CD8-positive, alpha-beta memory T cell (primary cell): ENCODE measurements at regions of chr7 and their contacts with region 1.

Region 1: DNA sequence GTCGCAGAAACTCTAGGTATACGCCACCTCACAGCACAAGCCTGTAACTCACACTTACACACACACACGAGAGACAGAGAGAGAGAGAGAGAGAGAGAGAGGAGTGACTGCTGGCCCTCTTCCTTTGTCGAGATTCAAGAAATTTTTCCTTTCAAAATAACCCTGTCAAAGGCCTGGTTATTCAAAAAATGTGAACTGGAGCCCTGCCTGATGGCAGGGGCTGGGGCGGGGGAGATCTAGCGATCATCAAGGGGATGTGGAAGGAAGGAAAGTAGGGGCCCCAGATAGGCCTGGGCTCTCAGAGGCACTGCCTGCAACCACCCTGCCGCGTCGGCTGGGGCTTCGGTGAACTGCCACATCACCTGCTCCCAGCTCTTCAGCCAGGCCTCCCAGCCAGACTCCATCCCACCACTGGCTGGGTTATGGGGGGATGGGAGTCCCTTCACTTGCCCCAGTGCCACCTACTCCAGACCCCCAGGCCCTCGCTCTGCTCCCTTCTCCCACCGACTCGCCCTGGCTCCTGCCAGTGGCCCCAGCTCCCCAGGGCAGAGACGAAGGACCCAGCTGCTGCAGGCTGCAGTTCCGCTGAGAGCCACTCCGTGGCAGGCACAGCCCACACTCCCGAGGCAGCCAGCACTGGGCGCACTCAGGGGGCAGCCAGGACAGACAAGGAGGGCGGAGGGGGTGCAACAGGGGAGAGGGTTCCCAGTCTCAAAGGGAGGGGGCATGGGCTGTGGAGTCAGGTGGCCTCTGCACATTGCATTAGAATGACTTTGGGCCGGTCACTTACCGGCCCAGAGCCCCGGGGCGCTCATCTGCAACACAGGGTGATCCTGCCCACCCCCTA is 15.3 kb downstream of the KCNH2 start:
- DNase-seq: peak; percentile 35 to 69 (median 50)
- H3K4me3 ChIP-seq: no peak overlapping the region
- H3K4me3 Mint-ChIP-seq: peak overlapping the region in 1 of 7 donors; percentile 79
- H3K27ac ChIP-seq: peak overlapping the region; percentile 76
- H3K27ac Mint-ChIP-seq: no peak overlapping the region
- H3K4me1 ChIP-seq: peaks cover 9% of the 10 kb centered on the region
- H3K4me1 Mint-ChIP-seq: peaks cover 2 to 10% (median 4%) of the 10 kb centered on the region in 3 donors
- H3K27me3 ChIP-seq: peaks cover 7% of the 10 kb centered on the region
- H3K27me3 Mint-ChIP-seq: peaks cover 19 to 28% of the 10 kb centered on the region in 2 donors

Region 2: GRCh38 chr7:150420987-150421674 is 541.6 kb before region 1 on chr7:
- CTCF ChIA-PET with region 1: no interaction called
- POLR2A ChIA-PET with region 1: no interaction called
- DNase-seq: peak; percentile 71 to 86 (median 79)
- H3K4me3 ChIP-seq: no peak overlapping the region
- H3K4me3 Mint-ChIP-seq: peak overlapping the region in 5 of 7 donors; percentile 1 to 67 (median 39)
- H3K27ac ChIP-seq: no peak overlapping the region
- H3K27ac Mint-ChIP-seq: peak overlapping the region in 3 of 8 donors; percentile 43 to 71 (median 71)
- H3K4me1 ChIP-seq: peaks cover 4% of the 10 kb centered on the region
- H3K4me1 Mint-ChIP-seq: peaks cover 5 to 7% (median 6%) of the 10 kb centered on the region in 3 donors
- H3K27me3 ChIP-seq: no peaks in the 10 kb centered on the region
- H3K27me3 Mint-ChIP-seq: peaks cover 0 to 4% of the 10 kb centered on the region in 2 donors

Region 3: GRCh38 chr7:150891740-150892139 is 71.0 kb before region 1 on chr7:
- CTCF ChIA-PET with region 1: no interaction called
- POLR2A ChIA-PET with region 1: no interaction called
- DNase-seq: no peak
- H3K4me3 ChIP-seq: no peak overlapping the region
- H3K4me3 Mint-ChIP-seq: no peak overlapping the region
- H3K27ac ChIP-seq: no peak overlapping the region
- H3K27ac Mint-ChIP-seq: no peak overlapping the region
- H3K4me1 ChIP-seq: no peaks in the 10 kb centered on the region
- H3K4me1 Mint-ChIP-seq: no peaks in the 10 kb centered on the region
- H3K27me3 ChIP-seq: peaks cover 2% of the 10 kb centered on the region
- H3K27me3 Mint-ChIP-seq: peaks cover 6 to 28% of the 10 kb centered on the region in 2 donors

Region 4: DNA sequence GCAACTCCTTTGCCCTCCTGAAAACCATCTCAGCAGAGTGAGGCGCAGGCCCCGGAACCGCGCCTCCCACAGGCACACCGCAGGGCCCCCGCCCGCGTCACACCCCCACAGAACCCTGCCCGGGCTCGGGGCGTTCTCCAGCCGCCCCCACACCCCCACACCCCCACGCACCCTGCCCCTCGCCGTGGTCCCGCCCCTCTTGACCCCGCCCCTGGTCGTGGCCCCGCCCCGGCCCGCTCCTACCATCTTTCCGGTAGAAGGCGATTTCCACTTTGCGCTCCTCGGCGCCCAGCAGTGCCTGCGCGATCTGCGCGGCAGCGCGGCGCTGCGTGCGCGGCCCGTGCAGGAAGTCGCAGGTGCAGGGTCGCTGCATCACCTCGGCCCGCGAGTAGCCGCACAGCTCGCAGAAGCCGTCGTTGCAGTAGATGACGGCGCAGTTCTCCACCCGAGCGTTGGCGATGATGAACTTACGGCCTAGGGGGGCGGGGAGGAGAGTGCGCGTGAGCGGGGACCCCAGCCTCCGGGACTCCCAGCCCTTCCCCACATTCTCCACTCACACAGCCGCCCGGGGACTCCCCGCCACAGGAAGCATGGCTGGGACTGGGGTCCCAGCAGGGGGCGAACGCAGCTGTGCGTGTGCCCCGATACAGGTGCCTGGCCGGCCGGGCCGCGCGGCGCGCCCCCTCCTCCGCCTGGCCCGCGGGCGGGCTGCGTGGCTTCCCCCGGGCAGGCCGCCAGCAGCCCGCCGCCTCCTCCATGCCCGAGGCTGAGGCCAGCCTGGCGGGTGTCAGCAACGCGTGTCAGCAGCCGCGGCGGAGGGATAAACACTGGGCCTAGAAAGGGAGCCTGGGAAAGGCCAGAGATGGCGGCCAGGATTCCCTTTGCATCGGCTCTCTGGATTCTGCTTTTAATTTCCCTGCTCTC is 12.0 kb after region 1 on chr7:
- CTCF ChIA-PET with region 1: interaction called, 18 read pairs
- POLR2A ChIA-PET with region 1: no interaction called
- DNase-seq: peak; percentile 69 to 86 (median 78)
- H3K4me3 ChIP-seq: peak overlapping the region; percentile 78
- H3K4me3 Mint-ChIP-seq: peak overlapping the region; percentile 86 to 90 (median 88)
- H3K27ac ChIP-seq: peak overlapping the region; percentile 64
- H3K27ac Mint-ChIP-seq: peak overlapping the region; percentile 58 to 96 (median 87)
- H3K4me1 ChIP-seq: peaks cover 45% of the 10 kb centered on the region
- H3K4me1 Mint-ChIP-seq: peaks cover 32 to 46% (median 35%) of the 10 kb centered on the region in 3 donors
- H3K27me3 ChIP-seq: peaks cover 21% of the 10 kb centered on the region
- H3K27me3 Mint-ChIP-seq: peaks cover 24 to 25% of the 10 kb centered on the region in 2 donors

Region 5: GRCh38 chr7:150988230-150989226 is 25.8 kb after region 1 on chr7:
- CTCF ChIA-PET with region 1: interaction called, 33 read pairs
- POLR2A ChIA-PET with region 1: no interaction called
- DNase-seq: peak; percentile 54 to 75 (median 62)
- H3K4me3 ChIP-seq: peak overlapping the region; percentile 38
- H3K4me3 Mint-ChIP-seq: peak overlapping the region in 5 of 7 donors; percentile 15 to 65 (median 54)
- H3K27ac ChIP-seq: no peak overlapping the region
- H3K27ac Mint-ChIP-seq: peak overlapping the region in 2 of 8 donors; percentile 29 to 64
- H3K4me1 ChIP-seq: peaks cover 17% of the 10 kb centered on the region
- H3K4me1 Mint-ChIP-seq: peaks cover 12 to 24% (median 15%) of the 10 kb centered on the region in 3 donors
- H3K27me3 ChIP-seq: no peaks in the 10 kb centered on the region
- H3K27me3 Mint-ChIP-seq: peaks cover 18 to 31% of the 10 kb centered on the region in 2 donors

Region 6: DNA sequence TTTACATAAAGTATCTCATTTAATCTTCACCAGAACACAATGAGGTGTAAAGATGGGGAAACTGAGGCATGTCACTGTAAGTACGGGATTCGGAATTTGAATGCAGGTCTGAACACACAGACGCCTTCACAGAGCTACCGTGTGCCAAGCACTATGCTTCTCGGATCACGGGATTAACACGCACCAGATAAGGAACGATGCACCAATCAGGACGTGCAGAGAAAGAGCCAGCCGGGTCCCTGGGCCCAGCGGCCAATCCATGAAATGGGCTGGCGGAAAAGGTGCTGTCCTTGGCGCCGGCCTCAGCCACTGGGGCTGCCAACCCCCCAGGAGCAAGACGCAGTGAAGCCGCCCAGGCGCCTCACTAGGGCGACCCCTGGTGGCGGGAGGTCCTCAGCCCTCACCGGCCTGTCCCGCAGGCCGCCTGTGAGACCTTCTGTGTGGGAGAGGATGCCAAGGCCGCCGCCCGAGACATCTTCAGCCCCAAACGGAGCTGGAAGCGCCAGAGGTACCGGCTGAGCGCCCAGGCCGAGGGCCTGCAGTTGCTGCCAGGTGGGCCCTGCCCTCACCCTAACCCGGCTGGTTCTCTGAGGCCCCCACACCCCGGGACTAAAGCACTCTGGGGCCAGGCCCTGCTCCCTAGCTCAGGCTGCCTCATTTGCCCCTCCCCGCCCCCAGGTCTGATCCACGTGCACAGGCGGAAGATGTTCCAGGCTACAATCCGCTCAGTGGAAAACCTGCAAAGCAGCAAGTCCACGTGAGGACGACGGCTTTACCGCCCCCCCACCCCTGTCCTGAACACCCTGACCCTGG is 45.9 kb after region 1 on chr7:
- CTCF ChIA-PET with region 1: interaction called, 11 read pairs
- POLR2A ChIA-PET with region 1: no interaction called
- DNase-seq: peak; percentile 70 to 85 (median 79)
- H3K4me3 ChIP-seq: peak overlapping the region; percentile 44
- H3K4me3 Mint-ChIP-seq: peak overlapping the region; percentile 75 to 93 (median 83)
- H3K27ac ChIP-seq: peak overlapping the region; percentile 66
- H3K27ac Mint-ChIP-seq: peak overlapping the region; percentile 70 to 97 (median 93)
- H3K4me1 ChIP-seq: peaks cover 65% of the 10 kb centered on the region
- H3K4me1 Mint-ChIP-seq: peaks cover 48 to 65% (median 55%) of the 10 kb centered on the region in 3 donors
- H3K27me3 ChIP-seq: no peaks in the 10 kb centered on the region
- H3K27me3 Mint-ChIP-seq: peaks cover 0 to 6% of the 10 kb centered on the region in 2 donors

Region 7: GRCh38 chr7:151017953-151018420 is 55.2 kb after region 1 on chr7:
- CTCF ChIA-PET with region 1: interaction called, 40 read pairs
- POLR2A ChIA-PET with region 1: no interaction called
- DNase-seq: peak; percentile 72 to 86 (median 73)
- H3K4me3 ChIP-seq: peak overlapping the region; percentile 67
- H3K4me3 Mint-ChIP-seq: peak overlapping the region; percentile 80 to 93 (median 85)
- H3K27ac ChIP-seq: no peak overlapping the region
- H3K27ac Mint-ChIP-seq: peak overlapping the region; percentile 66 to 96 (median 90)
- H3K4me1 ChIP-seq: peaks cover 58% of the 10 kb centered on the region
- H3K4me1 Mint-ChIP-seq: peaks cover 39 to 61% (median 46%) of the 10 kb centered on the region in 3 donors
- H3K27me3 ChIP-seq: no peaks in the 10 kb centered on the region
- H3K27me3 Mint-ChIP-seq: peaks cover 15 to 22% of the 10 kb centered on the region in 2 donors